Heart right ventricle (tissue), 16 donors: ENCODE measurements at regions of chr7 and their contacts with region 1.

Region 1: GRCh38 chr7:47698231-47698785 is 116.4 kb upstream of the TNS3 start:
- DNase-seq: no peak
- ATAC-seq: no peak
- H3K4me3 ChIP-seq: no peak overlapping the region
- H3K27ac ChIP-seq: no peak overlapping the region
- H3K4me1 ChIP-seq: no peaks in the 10 kb centered on the region
- H3K27me3 ChIP-seq: no peaks in the 10 kb centered on the region
- CTCF ChIP-seq: no peak

Region 2: GRCh38 chr7:47625861-47626715 is 72.2 kb before region 1 on chr7:
- intact Hi-C with region 1: loop called in 1 of 10 experiments (anchors 1 kb)
- DNase-seq: no peak
- ATAC-seq: no peak
- H3K4me3 ChIP-seq: no peak overlapping the region
- H3K27ac ChIP-seq: no peak overlapping the region
- H3K4me1 ChIP-seq: peaks cover 0 to 29% (median 19%) of the 10 kb centered on the region in 9 donors
- H3K27me3 ChIP-seq: no peaks in the 10 kb centered on the region
- CTCF ChIP-seq: no peak